ENCODE measurements at regions of chr4 and their contacts with region 1.

Region 1: DNA sequence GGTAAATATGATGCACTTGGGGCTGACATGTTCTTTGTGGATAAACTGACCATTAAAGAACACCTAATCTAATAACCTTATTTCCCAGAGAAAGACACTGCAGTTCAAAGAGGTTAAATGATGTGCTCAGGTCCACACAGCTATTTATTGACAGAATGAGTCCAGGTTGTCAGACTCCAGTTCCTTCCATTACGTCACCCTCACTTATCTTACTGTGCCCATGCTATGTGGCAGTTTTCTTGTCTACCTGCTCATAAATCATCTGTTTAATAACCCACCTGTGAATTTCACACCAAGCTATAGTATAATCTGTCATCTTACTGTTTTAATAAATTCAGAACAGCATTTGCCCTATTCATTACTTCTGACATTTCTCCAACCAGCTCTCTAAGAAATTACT is 36.7 kb downstream of the QRFPR start:
- DNase-seq: no peak
- H3K4me3 ChIP-seq: no peak overlapping the region
- H3K27ac ChIP-seq: no peak overlapping the region
- H3K4me1 ChIP-seq: no peaks in the 10 kb centered on the region
- H3K27me3 ChIP-seq: no peaks in the 10 kb centered on the region
- CTCF ChIP-seq: no peak

Region 2: GRCh38 chr4:121324331-121324730 is 19.8 kb before region 1 on chr4:
- intact Hi-C with region 1: loop called (anchors 1 kb)
- DNase-seq: no peak
- H3K4me3 ChIP-seq: no peak overlapping the region
- H3K27ac ChIP-seq: no peak overlapping the region
- H3K4me1 ChIP-seq: no peaks in the 10 kb centered on the region
- H3K27me3 ChIP-seq: no peaks in the 10 kb centered on the region
- CTCF ChIP-seq: no peak

Measured in tibial artery (tissue), 4 donors.